H1 (cell line): ENCODE measurements at regions of chr17 and their contacts with region 1.

Region 1: DNA sequence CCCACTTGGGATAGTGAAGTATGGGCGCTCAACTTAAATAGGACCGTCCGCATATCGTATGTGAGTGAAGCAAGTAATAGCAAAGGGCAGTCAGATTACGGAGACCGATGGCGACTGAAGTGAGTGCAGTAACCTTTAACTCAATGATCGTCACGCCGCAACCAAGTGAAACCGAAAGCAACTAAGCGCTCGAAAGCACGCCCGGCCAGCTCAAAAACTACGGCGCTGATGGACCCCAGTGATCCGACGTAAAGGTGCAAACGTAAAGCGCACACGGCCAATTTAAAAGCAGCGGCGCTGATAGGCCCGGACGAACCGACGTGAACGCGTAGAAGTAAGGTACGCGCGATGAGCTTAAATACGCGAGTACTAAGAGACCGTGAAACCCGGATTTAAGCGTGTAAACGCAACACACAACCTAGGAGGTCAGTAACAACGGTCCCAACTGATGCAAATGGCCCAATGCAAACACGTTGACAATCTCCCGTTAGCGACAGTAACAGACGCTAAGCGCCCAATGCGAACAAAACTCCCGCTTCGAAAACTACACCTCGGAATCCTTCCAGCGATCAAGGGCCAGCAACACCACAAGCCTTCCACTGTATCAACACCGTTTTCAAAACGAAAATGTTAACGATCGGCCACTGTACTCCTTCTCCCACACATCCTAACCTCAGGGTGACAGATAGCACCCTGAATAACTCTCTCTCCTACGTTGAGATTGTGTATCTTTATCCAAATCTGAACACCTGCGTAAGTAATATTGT is 37.9 kb upstream of the ARL4D start:
- DNase-seq: peak; percentile 88 to 98
- H3K4me3 ChIP-seq: peak overlapping the region; percentile 60 to 70 (median 67)
- H3K27ac ChIP-seq: peak overlapping the region; percentile 100
- H3K4me1 ChIP-seq: peaks cover 2 to 9% (median 3%) of the 10 kb centered on the region in 4 experiments; a peak in 5 of 7 replicates
- H3K27me3 ChIP-seq: peaks cover 0 to 17% (median 7%) of the 10 kb centered on the region in 4 experiments; a peak in 5 of 7 replicates
- CTCF ChIP-seq: no peak
- EP300 ChIP-seq: peak in 1 of 2 experiments; percentile 80; a peak in 1 of 3 replicates
- POLR2A ChIP-seq: peak; percentile 100
- RAD21 ChIP-seq: peak in 1 of 2 experiments; percentile 30; a peak in 1 of 4 replicates

Region 2: DNA sequence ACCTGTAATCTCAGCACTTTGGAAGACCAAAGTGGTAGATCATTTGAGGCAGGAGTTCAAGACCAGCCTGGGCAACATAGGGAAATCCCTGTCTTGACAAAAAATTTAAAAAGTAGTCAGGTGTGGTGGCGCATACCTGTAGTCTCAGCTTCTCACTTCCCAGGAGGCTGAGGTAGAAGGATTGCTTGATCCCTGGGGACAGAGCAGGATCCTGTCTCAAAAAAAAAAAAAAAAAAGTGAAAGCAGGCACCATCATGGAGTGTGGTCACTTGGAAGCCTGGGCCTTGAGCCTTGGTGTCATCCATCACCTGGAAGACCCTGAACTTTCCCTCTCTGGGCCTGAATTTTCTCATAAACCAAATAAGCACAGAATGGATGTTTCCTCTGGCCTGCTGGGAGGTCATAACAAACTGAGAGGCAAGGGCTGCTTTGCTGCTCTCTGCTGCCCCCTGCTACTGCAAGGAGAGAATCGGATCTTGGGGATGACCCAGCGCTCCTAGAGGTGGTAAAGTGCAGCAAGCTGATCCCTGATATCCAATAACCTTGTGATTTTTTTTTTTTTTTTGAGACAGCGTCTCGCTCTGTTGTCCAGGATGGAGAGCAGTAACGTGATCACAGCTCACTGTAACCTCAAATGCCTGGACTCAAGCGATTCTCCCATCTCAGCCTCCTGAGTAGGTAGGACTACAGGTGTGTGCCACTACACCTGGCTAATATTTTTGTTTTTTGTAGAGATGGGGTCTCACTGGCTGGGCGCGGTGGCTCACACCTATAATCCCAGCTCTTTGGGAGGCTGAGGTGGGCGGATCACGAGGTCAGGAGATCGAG is 51.2 kb before region 1 on chr17:
- CTCF ChIA-PET with region 1: interaction called, 3 read pairs
- POLR2A ChIA-PET with region 1: interaction called, 65 read pairs
- DNase-seq: peak in 1 of 2 experiments; percentile 46
- H3K4me3 ChIP-seq: no peak overlapping the region
- H3K27ac ChIP-seq: no peak overlapping the region
- H3K4me1 ChIP-seq: peaks cover 0 to 4% (median 0%) of the 10 kb centered on the region in 4 experiments; a peak in 1 of 7 replicates
- H3K27me3 ChIP-seq: no peaks in the 10 kb centered on the region
- CTCF ChIP-seq: no peak
- EP300 ChIP-seq: no peak
- POLR2A ChIP-seq: no peak
- RAD21 ChIP-seq: no peak

Region 3: DNA sequence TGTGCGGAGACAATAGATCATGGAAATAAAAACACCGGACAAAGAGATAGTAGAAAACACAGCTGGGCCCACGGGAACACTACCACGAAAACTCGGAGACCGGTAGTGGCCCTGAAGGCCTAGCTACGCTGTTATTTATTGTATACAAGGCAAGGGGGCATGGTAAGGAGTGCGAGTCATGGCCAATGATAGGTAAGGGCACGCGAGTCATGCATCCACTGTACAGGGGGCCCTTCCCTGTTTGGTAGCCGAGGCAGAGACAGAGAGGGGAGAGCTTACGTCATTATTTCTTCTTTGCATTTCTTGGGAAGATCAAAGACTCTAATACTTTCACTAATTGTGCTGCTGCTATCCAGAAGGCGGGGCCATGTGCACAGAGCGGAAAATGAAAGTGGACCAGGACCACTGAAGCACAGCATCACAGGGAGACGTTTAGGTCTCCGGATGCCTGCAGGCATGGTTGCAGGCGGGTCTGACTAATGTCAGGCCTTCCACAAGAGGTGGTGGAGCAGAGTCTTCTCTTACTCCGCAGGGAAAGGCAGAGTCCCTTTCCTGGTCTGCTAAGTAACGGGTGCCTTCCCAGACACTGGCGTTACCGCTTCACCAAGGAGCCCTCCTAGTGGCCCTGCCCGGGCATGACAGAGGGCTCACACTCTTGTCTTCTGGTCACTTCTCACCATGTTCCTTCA is 36.6 kb before region 1 on chr17:
- CTCF ChIA-PET with region 1: interaction called, 4 read pairs
- POLR2A ChIA-PET with region 1: interaction called, 22 read pairs
- DNase-seq: no peak
- H3K4me3 ChIP-seq: no peak overlapping the region
- H3K27ac ChIP-seq: no peak overlapping the region
- H3K4me1 ChIP-seq: peaks cover 0 to 3% (median 0%) of the 10 kb centered on the region in 4 experiments; a peak in 2 of 7 replicates
- H3K27me3 ChIP-seq: no peaks in the 10 kb centered on the region
- CTCF ChIP-seq: peak; percentile 29 to 47 (median 43)
- EP300 ChIP-seq: no peak
- POLR2A ChIP-seq: no peak
- RAD21 ChIP-seq: peak; percentile 6 to 22; a peak in 2 of 4 replicates

Region 4: GRCh38 chr17:43338886-43339516 is 21.9 kb before region 1 on chr17:
- CTCF ChIA-PET with region 1: interaction called, 29 read pairs
- POLR2A ChIA-PET with region 1: interaction called, 46 read pairs
- DNase-seq: peak in 1 of 2 experiments; percentile 77
- H3K4me3 ChIP-seq: no peak overlapping the region
- H3K27ac ChIP-seq: no peak overlapping the region
- H3K4me1 ChIP-seq: peaks cover 6 to 7% (median 6%) of the 10 kb centered on the region in 4 experiments; a peak in 6 of 7 replicates
- H3K27me3 ChIP-seq: no peaks in the 10 kb centered on the region
- CTCF ChIP-seq: peak; percentile 62 to 66 (median 64)
- EP300 ChIP-seq: no peak
- POLR2A ChIP-seq: no peak
- RAD21 ChIP-seq: peak; percentile 70 to 71

Region 5: GRCh38 chr17:43377056-43377810 is 16.3 kb after region 1 on chr17:
- CTCF ChIA-PET with region 1: interaction called, 6 read pairs
- POLR2A ChIA-PET with region 1: interaction called, 117 read pairs
- DNase-seq: peak in 1 of 2 experiments; percentile 63
- H3K4me3 ChIP-seq: no peak overlapping the region
- H3K27ac ChIP-seq: no peak overlapping the region
- H3K4me1 ChIP-seq: peaks cover 0 to 3% (median 0%) of the 10 kb centered on the region in 4 experiments; a peak in 2 of 7 replicates
- H3K27me3 ChIP-seq: no peaks in the 10 kb centered on the region
- CTCF ChIP-seq: no peak
- EP300 ChIP-seq: no peak
- POLR2A ChIP-seq: no peak
- RAD21 ChIP-seq: no peak

Region 6: GRCh38 chr17:43393944-43394482 is 33.1 kb after region 1 on chr17:
- CTCF ChIA-PET with region 1: interaction called, 10 read pairs
- POLR2A ChIA-PET with region 1: interaction called, 184 read pairs
- DNase-seq: peak in 1 of 2 experiments; percentile 97
- H3K4me3 ChIP-seq: no peak overlapping the region
- H3K27ac ChIP-seq: no peak overlapping the region
- H3K4me1 ChIP-seq: peaks cover 0 to 3% (median 0%) of the 10 kb centered on the region in 4 experiments; a peak in 3 of 7 replicates
- H3K27me3 ChIP-seq: no peaks in the 10 kb centered on the region
- CTCF ChIP-seq: peak; percentile 56 to 91 (median 91)
- EP300 ChIP-seq: no peak
- POLR2A ChIP-seq: no peak
- RAD21 ChIP-seq: peak; percentile 97